Calu3 (cell line): ENCODE measurements at regions of chr16 and their contacts with region 1.

Region 1: GRCh38 chr16:30657866-30658730 is at the start of gene FBRS:
- DNase-seq: peak; percentile 100
- H3K4me3 Mint-ChIP-seq: peak within 1 kb of the TSS; percentile 91
- H3K27ac Mint-ChIP-seq: peak within 1 kb of the TSS; percentile 99
- H3K4me1 Mint-ChIP-seq: peaks cover 28% of the 10 kb centered on the region
- H3K27me3 Mint-ChIP-seq: no peaks in the 10 kb centered on the region
- CTCF ChIP-seq: peak; percentile 84
- total RNA-seq, gene FBRS: 113 and 114 TPM in 2 replicates

Region 2: DNA sequence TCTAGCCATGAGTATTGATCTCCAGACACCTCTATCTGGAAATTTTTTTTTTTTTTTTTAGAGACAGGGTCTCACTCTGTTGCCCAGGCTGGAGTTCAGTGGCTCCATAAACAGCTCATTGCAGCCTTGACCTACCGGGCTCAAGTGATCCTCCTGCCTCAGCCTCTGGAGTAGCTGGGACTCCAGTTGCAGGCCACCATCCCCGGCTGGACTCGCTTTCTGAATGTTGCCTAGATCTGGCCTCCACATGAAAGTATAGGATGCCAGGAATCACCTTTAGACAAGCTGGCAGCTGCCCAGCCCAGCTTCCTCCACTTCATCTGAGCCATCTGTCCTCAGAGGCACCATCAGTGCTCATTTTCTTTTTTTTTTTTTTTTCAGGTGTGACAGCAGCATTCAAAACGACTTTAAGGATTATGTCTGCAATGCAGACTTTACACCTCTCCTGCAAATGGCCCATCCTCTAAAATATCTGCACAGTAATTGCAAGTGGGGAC is 13.7 kb before region 1 on chr16:
- CTCF ChIA-PET with region 1: no interaction called
- intact Hi-C with region 1: no loop called
- DNase-seq: no peak
- H3K4me3 Mint-ChIP-seq: no peak overlapping the region
- H3K27ac Mint-ChIP-seq: no peak overlapping the region
- H3K4me1 Mint-ChIP-seq: no peaks in the 10 kb centered on the region
- H3K27me3 Mint-ChIP-seq: no peaks in the 10 kb centered on the region
- CTCF ChIP-seq: no peak

Region 3: DNA sequence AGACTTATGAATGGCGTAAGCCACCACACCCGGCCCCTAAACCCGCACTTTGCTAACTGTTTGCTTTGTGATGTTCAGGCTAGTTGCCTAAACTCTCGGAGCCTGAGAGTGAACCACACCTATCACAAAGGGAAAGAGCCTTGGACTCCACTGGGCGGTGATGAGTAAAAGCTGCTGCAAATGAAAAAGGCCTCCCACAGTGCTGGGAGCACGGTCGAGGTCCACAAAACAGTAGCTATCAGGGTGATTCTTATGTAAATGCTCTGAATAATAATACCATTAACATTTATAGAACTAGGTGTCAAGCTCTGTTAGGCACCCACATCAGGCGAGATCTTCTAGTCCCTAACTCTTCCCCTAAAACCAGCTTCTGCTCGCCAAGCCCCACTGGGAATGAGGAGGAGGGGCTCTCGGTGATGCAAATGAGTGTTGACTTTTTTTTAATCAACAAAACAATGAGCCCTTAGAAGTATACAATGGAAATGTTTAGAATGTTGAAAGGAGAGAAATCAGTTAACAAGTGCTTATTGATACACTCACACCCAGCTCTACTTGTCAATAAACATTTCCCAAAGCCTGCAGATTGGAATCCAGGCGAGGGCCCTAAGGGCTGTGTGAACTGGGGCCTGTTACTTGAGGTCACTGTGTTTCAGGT is 20.0 kb after region 1 on chr16:
- CTCF ChIA-PET with region 1: no interaction called
- intact Hi-C with region 1: loop called (anchors 2 kb)
- DNase-seq: no peak
- H3K4me3 Mint-ChIP-seq: no peak overlapping the region
- H3K27ac Mint-ChIP-seq: no peak overlapping the region
- H3K4me1 Mint-ChIP-seq: no peaks in the 10 kb centered on the region
- H3K27me3 Mint-ChIP-seq: no peaks in the 10 kb centered on the region
- CTCF ChIP-seq: no peak

Region 4: GRCh38 chr16:30698139-30698815 is 40.2 kb after region 1 on chr16:
- CTCF ChIA-PET with region 1: interaction called, 16 read pairs
- intact Hi-C with region 1: loop called (anchors 5 kb)
- DNase-seq: peak; percentile 99
- H3K4me3 Mint-ChIP-seq: peak overlapping the region; percentile 96
- H3K27ac Mint-ChIP-seq: peak overlapping the region; percentile 99
- H3K4me1 Mint-ChIP-seq: peaks cover 33% of the 10 kb centered on the region
- H3K27me3 Mint-ChIP-seq: no peaks in the 10 kb centered on the region
- CTCF ChIP-seq: no peak